ENCODE measurements at regions of chr17 and their contacts with region 1.

Region 1: DNA sequence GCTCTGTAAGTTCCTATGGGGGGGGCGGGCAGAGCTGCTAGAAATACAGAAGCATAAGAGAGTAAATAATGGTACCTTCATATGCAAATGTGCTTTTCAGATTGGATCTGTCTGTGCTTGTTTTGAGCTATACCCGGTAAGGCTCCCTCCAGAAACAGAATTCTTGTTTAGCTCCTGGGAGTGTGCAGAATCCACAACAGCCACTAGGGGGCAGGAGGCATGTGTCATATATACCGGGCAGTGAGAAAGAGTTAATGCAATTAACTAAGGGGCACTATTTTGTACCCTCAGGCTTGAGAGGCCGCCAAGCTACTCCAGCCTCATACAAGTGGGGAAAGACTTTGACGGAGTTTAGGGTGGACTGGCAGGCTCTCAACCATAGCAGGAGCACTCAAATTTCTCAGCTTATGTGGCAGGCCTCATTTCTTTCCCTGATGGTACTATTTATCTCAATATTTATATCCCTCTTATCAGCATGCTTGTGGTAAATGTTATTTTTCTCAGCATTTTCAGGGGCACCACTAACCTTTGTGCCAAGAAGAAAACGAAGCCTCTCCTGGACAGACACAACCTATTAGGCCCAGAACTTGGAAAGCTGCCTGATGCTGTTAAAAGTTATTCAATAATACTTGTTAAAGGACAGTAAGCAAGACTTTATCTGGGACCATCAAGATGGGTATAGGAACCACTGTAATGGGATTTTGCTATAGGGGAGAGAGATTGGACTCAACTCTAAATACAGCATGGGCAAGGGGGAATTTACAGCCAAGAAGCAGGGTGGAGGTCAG is 10.7 kb upstream of the CENPV start:
- DNase-seq: peak; percentile 72 to 93 (median 79)
- H3K4me3 ChIP-seq: peak overlapping the region in 2 of 59 donors; percentile 7 to 15
- H3K27ac ChIP-seq: peak overlapping the region in 57 of 59 donors; percentile 1 to 84 (median 71)
- H3K27me3 ChIP-seq: no peaks in the 10 kb centered on the region
- CTCF ChIP-seq: peak; percentile 84 to 98 (median 94)

Region 2: DNA sequence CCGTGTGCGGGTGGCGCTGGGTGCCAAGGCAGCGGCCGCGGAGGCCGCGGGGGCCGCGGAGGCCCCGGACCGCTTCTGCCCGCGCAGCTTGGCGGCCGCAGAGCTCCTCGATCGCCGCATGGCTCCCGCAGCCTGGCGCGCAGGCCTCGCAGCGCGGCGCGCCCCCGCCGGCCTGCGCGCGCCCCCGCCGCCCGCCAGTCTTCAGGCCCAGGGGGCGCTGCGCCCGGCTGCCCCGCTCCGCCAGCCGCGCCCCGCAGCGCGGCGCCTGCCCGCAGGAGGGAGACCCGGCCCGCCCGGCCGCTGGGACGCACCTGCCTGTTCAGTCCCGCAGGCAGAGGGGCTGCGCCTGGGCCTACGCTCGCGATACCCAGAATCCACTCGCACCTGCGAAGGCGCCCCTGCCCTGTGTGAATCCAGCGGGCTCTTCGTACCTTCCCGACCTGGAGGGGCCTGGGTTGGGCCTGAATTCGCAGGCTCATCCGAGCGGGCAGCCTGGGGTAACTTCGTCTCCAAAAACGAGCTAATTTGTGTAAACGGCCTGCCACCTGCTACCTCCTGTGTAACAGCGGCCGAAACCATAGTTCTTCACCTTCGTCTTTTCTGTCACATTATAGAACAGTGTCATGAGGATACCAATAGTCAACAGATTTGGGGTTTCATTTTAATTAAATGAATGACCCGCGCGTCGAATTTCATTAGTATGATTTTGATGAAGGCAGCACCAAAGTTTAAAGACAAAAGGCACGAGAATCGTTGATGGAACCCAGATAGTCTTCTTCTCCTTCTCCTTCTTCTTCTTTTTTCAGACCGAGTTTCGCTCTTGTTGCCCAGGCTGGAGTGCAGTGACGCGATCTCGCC is 10.4 kb before region 1 on chr17 and contains the start of gene CENPV:
- intact Hi-C with region 1: loop called in 1 of 2 experiments (anchors 1 kb)
- DNase-seq: peak in 6 of 10 donors; percentile 16 to 49 (median 30)
- H3K4me3 ChIP-seq: peak within 1 kb of the TSS; percentile 51 to 86 (median 75)
- H3K27ac ChIP-seq: peak within 1 kb of the TSS in 54 of 59 donors; percentile 40 to 90 (median 76)
- H3K27me3 ChIP-seq: no peaks in the 10 kb centered on the region
- CTCF ChIP-seq: peak in 9 of 56 donors; percentile 8 to 31 (median 17)
- total RNA-seq, gene CENPV: 24.6 to 89.3 (median 51.6) TPM

Region 3: GRCh38 chr17:16438557-16439302 is 74.8 kb after region 1 on chr17:
- intact Hi-C with region 1: loop called in 1 of 2 experiments (anchors 5 kb)
- DNase-seq: peak; percentile 86 to 99 (median 95)
- H3K4me3 ChIP-seq: peak overlapping the region; percentile 71 to 100 (median 92)
- H3K27ac ChIP-seq: peak overlapping the region; percentile 77 to 98 (median 95)
- H3K27me3 ChIP-seq: no peaks in the 10 kb centered on the region
- CTCF ChIP-seq: peak in 19 of 56 donors; percentile 3 to 55 (median 19)

Region 4: DNA sequence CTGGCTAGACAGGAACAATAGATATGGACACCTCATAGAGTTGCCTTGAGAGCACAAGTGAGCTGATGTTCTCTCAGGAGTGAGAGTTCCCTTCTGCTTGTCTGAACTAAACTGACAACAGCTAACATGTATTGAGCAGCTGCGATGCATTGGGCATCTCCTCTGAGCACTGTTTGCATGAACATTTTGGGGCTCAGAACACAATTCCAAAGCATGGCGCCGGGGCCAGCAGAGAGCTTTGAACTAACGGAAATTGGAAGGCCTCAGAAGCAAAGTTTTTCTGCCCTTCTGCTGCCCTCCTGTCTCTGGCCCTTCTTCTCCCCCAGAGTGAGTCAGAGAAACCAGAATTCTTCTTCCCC is 89.5 kb after region 1 on chr17:
- intact Hi-C with region 1: loop called in 1 of 2 experiments (anchors 5 kb)
- DNase-seq: no peak
- H3K4me3 ChIP-seq: no peak overlapping the region
- H3K27ac ChIP-seq: peak overlapping the region in 9 of 59 donors; percentile 5 to 59 (median 14)
- H3K27me3 ChIP-seq: no peaks in the 10 kb centered on the region
- CTCF ChIP-seq: peak in 5 of 56 donors; percentile 0 to 10 (median 3)

Region 5: DNA sequence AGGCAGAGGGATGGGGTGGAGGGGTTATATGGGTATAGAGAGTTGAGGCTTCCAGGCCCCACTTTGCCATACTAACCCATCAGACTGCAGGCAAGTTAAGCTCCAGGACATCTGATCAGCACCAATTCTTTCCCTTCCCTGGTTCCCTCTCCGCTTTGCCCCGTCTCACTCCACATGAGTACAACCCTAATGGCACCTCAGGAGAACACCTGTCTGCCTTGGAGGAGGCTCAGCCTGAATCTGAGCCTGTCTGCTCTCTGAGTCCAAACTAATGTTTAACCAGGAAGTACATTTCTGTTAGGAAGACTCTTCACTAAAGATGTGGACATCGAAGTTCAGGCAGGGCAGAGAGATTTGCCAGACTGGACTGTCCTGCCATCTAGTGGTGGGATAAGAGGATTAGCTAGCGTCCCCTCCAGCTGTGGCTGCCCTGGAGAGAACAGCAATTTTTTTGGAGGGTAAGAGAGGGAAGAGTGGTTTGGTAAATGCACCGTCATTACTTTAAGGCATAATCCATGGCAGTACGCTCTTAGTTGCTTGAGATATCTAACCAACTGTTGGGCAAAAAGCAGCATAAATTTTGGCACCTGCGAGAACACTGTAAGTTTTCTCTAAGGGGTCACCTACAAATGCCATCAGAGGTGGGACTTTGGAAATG is 157.3 kb after region 1 on chr17:
- intact Hi-C with region 1: loop called in 1 of 2 experiments (anchors 2 kb)
- DNase-seq: peak in 9 of 10 donors; percentile 59 to 78 (median 67)
- H3K4me3 ChIP-seq: no peak overlapping the region
- H3K27ac ChIP-seq: no peak overlapping the region
- H3K27me3 ChIP-seq: peaks cover 0 to 5% (median 0%) of the 10 kb centered on the region in 45 donors
- CTCF ChIP-seq: peak; percentile 57 to 98 (median 92)

Measured in dorsolateral prefrontal cortex (tissue), 120 donors.